ENCODE measurements at regions of chr2 and their contacts with region 1.

Region 1: GRCh38 chr2:187499941-187500532 is 52.0 kb upstream of the CALCRL start:
- DNase-seq: no peak
- ATAC-seq: peak; percentile 94
- H3K4me3 ChIP-seq: no peak overlapping the region
- H3K27ac ChIP-seq: no peak overlapping the region
- H3K4me1 ChIP-seq: no peaks in the 10 kb centered on the region
- H3K27me3 ChIP-seq: no peaks in the 10 kb centered on the region
- CTCF ChIP-seq: peak; percentile 61 to 92 (median 63); a peak in 5 of 6 replicates
- EP300 ChIP-seq: no peak
- POLR2A ChIP-seq: no peak
- RAD21 ChIP-seq: peak; percentile 99

Region 2: DNA sequence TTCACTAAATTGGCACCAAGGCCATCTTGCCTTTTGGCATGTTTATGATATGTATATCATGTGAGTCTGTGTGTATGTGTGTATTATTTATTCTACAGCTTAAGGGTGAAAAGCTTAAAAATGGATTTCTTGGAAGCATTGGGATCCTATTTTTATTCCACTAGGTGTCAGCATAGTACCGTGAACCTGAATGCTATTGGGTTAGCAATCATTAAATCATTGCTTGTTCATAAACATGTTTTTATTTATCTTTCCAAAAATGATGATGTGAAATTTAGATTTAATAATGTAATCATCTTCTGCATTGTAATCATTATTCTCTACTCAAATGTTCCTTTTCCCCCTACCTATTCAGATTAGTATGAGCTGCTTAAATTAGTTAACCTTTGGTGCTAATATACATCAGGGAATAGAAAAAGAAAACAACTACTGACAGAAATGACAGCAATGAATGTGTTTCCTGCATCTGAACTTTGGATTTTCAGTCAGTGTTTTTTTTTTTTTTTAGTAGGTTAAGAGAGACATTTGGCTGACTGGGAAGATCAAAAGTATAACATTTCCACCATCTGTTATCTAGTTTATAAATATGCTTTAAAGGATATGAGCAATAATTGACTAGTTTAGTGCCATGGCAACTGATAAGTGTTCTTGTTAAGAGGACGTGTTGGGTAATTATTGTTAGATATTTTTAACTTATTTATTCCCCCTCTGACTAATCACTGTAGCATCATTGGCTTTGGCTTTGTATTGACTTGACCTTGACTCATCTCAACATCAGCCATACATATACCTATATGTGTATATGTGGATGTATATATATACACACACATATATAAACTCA is 636.9 kb before region 1 on chr2:
- CTCF ChIA-PET with region 1: interaction called, 26 read pairs
- POLR2A ChIA-PET with region 1: no interaction called
- RAD21 ChIA-PET with region 1: interaction called, 21 read pairs
- SMC1A ChIA-PET with region 1: interaction called, 10 read pairs
- in situ Hi-C with region 1: no loop called
- intact Hi-C with region 1: no loop called
- DNase-seq: no peak
- ATAC-seq: peak; percentile 79
- H3K4me3 ChIP-seq: no peak overlapping the region
- H3K27ac ChIP-seq: no peak overlapping the region
- H3K4me1 ChIP-seq: no peaks in the 10 kb centered on the region
- H3K27me3 ChIP-seq: no peaks in the 10 kb centered on the region
- CTCF ChIP-seq: peak; percentile 35 to 77 (median 48); a peak in 4 of 6 replicates
- EP300 ChIP-seq: no peak
- POLR2A ChIP-seq: no peak
- RAD21 ChIP-seq: peak; percentile 91

Region 3: GRCh38 chr2:187482796-187483195 is 17.2 kb before region 1 on chr2:
- CTCF ChIA-PET with region 1: interaction called, 15 read pairs
- POLR2A ChIA-PET with region 1: no interaction called
- RAD21 ChIA-PET with region 1: interaction called, 8 read pairs
- SMC1A ChIA-PET with region 1: interaction called, 5 read pairs
- in situ Hi-C with region 1: no loop called
- intact Hi-C with region 1: no loop called
- DNase-seq: peak; percentile 32
- ATAC-seq: peak; percentile 96
- H3K4me3 ChIP-seq: no peak overlapping the region
- H3K27ac ChIP-seq: no peak overlapping the region
- H3K4me1 ChIP-seq: no peaks in the 10 kb centered on the region
- H3K27me3 ChIP-seq: no peaks in the 10 kb centered on the region
- CTCF ChIP-seq: no peak
- EP300 ChIP-seq: peak; percentile 51 to 84; a peak in 2 of 4 replicates
- POLR2A ChIP-seq: no peak
- RAD21 ChIP-seq: no peak

Region 4: GRCh38 chr2:187527262-187527661 is 27.2 kb after region 1 on chr2:
- CTCF ChIA-PET with region 1: interaction called, 18 read pairs
- POLR2A ChIA-PET with region 1: no interaction called
- RAD21 ChIA-PET with region 1: interaction called, 5 read pairs
- SMC1A ChIA-PET with region 1: interaction called, 8 read pairs
- in situ Hi-C with region 1: no loop called
- intact Hi-C with region 1: no loop called
- DNase-seq: no peak
- ATAC-seq: no peak
- H3K4me3 ChIP-seq: no peak overlapping the region
- H3K27ac ChIP-seq: no peak overlapping the region
- H3K4me1 ChIP-seq: no peaks in the 10 kb centered on the region
- H3K27me3 ChIP-seq: no peaks in the 10 kb centered on the region
- CTCF ChIP-seq: no peak
- EP300 ChIP-seq: no peak
- POLR2A ChIP-seq: no peak
- RAD21 ChIP-seq: no peak

Region 5: DNA sequence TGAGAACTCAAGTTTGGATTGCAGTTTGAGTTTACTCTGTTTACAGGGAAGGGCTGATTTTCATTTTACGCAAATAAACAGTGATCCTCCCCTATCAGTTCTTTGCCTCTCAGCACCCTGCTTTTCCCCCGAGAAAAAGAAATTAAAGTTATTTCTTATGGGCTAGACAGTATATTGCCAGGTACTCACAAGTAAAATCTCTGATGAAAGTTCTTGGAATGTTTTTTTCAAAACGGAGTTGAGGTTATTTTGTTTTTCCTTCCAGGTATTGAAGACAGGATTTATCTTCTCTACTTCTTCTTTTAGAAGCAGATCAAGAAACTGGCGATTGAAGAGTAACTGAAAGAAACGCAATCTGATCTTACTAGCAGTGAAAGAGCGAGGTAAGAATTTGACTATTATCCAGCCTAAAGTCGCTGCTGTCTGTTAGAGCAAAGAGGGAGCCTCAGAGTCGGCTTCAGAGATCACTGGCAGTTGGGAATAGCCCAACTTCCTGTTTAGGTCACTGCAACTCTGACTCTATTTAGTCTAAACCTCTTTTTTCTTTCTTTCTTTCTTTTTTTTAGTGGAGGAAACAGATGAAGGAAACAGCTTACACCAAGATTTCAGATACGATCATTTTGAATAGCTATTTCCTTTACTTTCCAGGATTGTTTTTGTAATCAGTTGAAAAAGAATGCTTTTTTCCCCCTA is 54.1 kb after region 1 on chr2 and contains the start of gene TFPI:
- CTCF ChIA-PET with region 1: interaction called, 22 read pairs
- POLR2A ChIA-PET with region 1: interaction called, 4 read pairs
- RAD21 ChIA-PET with region 1: interaction called, 11 read pairs
- SMC1A ChIA-PET with region 1: interaction called, 32 read pairs
- in situ Hi-C with region 1: no loop called
- intact Hi-C with region 1: no loop called
- DNase-seq: no peak
- ATAC-seq: peak; percentile 60
- H3K4me3 ChIP-seq: no peak within 1 kb of the TSS
- H3K27ac ChIP-seq: no peak within 1 kb of the TSS
- H3K4me1 ChIP-seq: no peaks in the 10 kb centered on the region
- H3K27me3 ChIP-seq: no peaks in the 10 kb centered on the region
- CTCF ChIP-seq: no peak
- EP300 ChIP-seq: no peak
- POLR2A ChIP-seq: no peak
- RAD21 ChIP-seq: no peak
- polyA plus RNA-seq, gene TFPI: 0.42 to 0.53 TPM

Region 6: DNA sequence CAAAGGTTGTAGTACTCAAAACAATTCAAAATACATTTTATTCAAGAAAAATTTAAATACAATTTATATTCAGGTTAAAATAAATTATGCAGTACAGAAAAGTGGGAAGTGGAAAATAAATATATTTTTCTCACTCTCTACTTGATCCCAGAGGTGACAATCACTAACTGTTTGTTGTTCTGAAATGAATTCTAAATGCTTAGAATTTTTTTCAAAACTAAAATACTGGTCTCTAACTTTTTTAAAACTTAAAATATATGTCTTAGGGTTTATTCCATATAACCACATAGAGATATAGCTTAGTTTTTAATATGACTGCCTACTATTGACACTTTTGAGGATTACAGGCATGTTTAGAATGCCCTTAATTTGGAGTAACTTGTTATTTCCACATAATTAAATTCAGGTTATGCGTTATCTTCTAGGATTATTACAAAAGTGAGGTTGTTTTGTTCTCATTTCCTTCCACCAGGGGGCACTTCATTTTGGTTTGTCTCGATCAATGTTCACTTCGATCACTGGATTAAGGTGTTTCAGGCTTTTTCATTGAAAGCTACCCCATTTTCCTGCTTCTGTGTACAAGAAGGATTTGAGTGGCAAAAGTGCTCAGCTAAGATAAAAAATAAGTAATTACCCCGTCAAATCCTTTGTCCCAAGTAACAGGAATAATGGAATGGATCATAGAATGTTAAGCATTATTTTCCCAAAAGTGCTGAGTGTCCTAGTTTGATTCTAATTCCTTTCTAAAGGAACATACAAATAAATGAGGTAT is 81.3 kb after region 1 on chr2:
- CTCF ChIA-PET with region 1: interaction called, 562 read pairs
- POLR2A ChIA-PET with region 1: interaction called, 11 read pairs
- RAD21 ChIA-PET with region 1: interaction called, 297 read pairs
- SMC1A ChIA-PET with region 1: interaction called, 389 read pairs
- in situ Hi-C with region 1: loop called (anchors 5 kb)
- intact Hi-C with region 1: loop called (anchors 1 kb)
- DNase-seq: no peak
- ATAC-seq: peak; percentile 74
- H3K4me3 ChIP-seq: no peak overlapping the region
- H3K27ac ChIP-seq: no peak overlapping the region
- H3K4me1 ChIP-seq: no peaks in the 10 kb centered on the region
- H3K27me3 ChIP-seq: no peaks in the 10 kb centered on the region
- CTCF ChIP-seq: peak; percentile 54 to 68 (median 61); a peak in 5 of 6 replicates
- EP300 ChIP-seq: no peak
- POLR2A ChIP-seq: no peak
- RAD21 ChIP-seq: peak; percentile 45

Region 7: DNA sequence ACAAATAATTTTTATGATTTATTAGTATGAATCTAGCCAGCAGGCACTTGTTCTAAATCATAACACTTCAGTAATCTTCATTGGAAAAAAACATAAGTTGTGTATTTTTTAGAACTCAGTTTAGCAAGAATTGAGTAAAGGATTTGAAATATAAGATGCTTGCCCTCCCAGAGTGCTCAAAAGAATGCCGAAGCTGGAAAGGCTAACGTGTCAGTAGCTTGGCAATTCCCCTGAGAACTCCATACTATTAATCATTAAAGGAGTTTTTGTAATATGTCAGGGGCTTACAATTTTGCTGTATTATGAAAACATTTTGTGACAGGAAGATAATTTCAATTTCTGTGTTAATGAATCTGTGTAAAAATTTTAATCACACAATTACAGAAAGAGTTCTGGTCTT is 914.4 kb after region 1 on chr2:
- CTCF ChIA-PET with region 1: no interaction called
- POLR2A ChIA-PET with region 1: no interaction called
- RAD21 ChIA-PET with region 1: no interaction called
- SMC1A ChIA-PET with region 1: no interaction called
- in situ Hi-C with region 1: no loop called
- intact Hi-C with region 1: no loop called
- DNase-seq: no peak
- ATAC-seq: no peak
- H3K4me3 ChIP-seq: no peak overlapping the region
- H3K27ac ChIP-seq: no peak overlapping the region
- H3K4me1 ChIP-seq: no peaks in the 10 kb centered on the region
- H3K27me3 ChIP-seq: no peaks in the 10 kb centered on the region
- CTCF ChIP-seq: no peak
- EP300 ChIP-seq: no peak
- POLR2A ChIP-seq: no peak
- RAD21 ChIP-seq: no peak

Region 8: GRCh38 chr2:188512456-188512855 is 1012.4 kb after region 1 on chr2:
- CTCF ChIA-PET with region 1: interaction called, 5 read pairs
- POLR2A ChIA-PET with region 1: no interaction called
- RAD21 ChIA-PET with region 1: interaction called, 5 read pairs
- SMC1A ChIA-PET with region 1: interaction called, 6 read pairs
- in situ Hi-C with region 1: no loop called
- intact Hi-C with region 1: loop called (anchors 5 kb)
- DNase-seq: no peak
- ATAC-seq: peak; percentile 64
- H3K4me3 ChIP-seq: no peak overlapping the region
- H3K27ac ChIP-seq: no peak overlapping the region
- H3K4me1 ChIP-seq: no peaks in the 10 kb centered on the region
- H3K27me3 ChIP-seq: no peaks in the 10 kb centered on the region
- CTCF ChIP-seq: peak; percentile 17 to 58 (median 24); a peak in 4 of 6 replicates
- EP300 ChIP-seq: no peak
- POLR2A ChIP-seq: no peak
- RAD21 ChIP-seq: peak; percentile 67